H1 (cell line): ENCODE measurements at regions of chr1 and their contacts with region 1.

Region 1: DNA sequence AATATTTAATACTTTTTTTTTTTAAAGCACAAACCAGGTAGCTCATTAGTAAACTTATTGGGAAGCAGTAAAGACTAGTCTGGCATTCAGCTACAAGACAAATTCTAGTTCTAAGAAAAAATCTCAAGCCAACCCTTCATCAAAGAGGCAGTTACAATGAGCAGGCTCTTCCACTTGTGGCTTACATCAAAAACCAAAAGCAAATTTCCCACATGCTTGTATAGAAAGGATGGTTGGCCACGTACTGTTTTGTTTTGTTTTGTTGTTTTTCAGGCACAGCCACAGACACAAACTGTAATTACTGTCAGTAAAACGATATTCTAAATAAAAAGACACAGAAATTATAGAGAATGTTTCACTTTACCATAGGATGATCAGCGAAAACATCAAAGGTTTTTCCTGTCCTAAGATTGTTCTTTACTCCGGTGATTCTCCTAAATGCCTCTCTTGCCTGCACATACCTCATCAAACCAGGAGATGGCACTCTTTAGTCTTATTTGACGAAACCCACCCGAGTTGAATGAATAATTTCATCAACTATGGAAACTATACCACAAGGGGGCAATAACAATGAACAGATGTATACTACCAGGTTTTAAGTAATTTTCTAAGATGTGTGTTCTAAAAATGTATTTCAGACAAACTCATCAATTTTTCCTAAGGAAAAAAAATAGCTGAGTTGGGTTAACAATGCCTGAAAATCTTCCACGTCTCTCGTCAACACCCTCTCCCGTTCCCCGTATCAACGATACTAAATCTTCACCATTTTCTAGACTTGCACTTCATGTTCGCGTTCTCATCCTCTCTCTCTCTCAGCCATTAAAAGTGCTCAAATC is 26.9 kb downstream of the RPL5 start:
- DNase-seq: no peak
- H3K4me3 ChIP-seq: no peak overlapping the region
- H3K27ac ChIP-seq: no peak overlapping the region
- H3K4me1 ChIP-seq: no peaks in the 10 kb centered on the region
- H3K27me3 ChIP-seq: no peaks in the 10 kb centered on the region
- CTCF ChIP-seq: peak in 2 of 3 experiments; percentile 88 to 98; a peak in 3 of 4 replicates
- EP300 ChIP-seq: no peak
- POLR2A ChIP-seq: no peak
- RAD21 ChIP-seq: peak; percentile 95 to 96

Region 2: GRCh38 chr1:92736395-92736794 is 122.4 kb before region 1 on chr1:
- CTCF ChIA-PET with region 1: no interaction called
- POLR2A ChIA-PET with region 1: no interaction called
- DNase-seq: no peak
- H3K4me3 ChIP-seq: no peak overlapping the region
- H3K27ac ChIP-seq: no peak overlapping the region
- H3K4me1 ChIP-seq: no peaks in the 10 kb centered on the region
- H3K27me3 ChIP-seq: no peaks in the 10 kb centered on the region
- CTCF ChIP-seq: peak in 2 of 3 experiments; percentile 32 to 43; a peak in 3 of 4 replicates
- EP300 ChIP-seq: no peak
- POLR2A ChIP-seq: no peak
- RAD21 ChIP-seq: peak; percentile 42 to 47

Region 3: DNA sequence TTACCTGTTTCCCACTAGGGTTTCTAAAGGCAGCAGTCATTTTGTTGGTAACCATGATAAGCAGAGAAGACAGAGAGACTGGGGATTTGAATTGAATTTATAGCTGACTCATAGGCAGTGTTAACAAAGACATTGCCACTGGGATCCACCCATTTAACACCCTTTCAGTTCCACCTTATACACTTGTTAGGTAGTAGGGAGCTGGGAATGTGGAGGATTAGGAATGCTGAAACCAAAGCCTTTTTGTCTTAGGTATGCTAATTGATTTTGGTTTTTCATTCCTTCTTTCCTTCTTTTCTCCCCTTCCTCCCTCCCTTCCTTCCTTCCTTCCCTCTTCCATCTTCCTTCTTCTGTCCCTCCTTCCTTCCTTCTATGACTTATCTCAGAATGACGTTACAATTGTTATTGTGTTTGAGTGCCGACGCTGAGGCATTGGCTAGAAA is 66.4 kb before region 1 on chr1:
- CTCF ChIA-PET with region 1: no interaction called
- POLR2A ChIA-PET with region 1: no interaction called
- DNase-seq: no peak
- H3K4me3 ChIP-seq: peak overlapping the region in 1 of 4 experiments; percentile 40; a peak in 1 of 8 replicates
- H3K27ac ChIP-seq: no peak overlapping the region
- H3K4me1 ChIP-seq: peaks cover 0 to 9% (median 2%) of the 10 kb centered on the region in 4 experiments; a peak in 3 of 7 replicates
- H3K27me3 ChIP-seq: no peaks in the 10 kb centered on the region
- CTCF ChIP-seq: no peak
- EP300 ChIP-seq: no peak
- POLR2A ChIP-seq: no peak
- RAD21 ChIP-seq: no peak

Region 4: DNA sequence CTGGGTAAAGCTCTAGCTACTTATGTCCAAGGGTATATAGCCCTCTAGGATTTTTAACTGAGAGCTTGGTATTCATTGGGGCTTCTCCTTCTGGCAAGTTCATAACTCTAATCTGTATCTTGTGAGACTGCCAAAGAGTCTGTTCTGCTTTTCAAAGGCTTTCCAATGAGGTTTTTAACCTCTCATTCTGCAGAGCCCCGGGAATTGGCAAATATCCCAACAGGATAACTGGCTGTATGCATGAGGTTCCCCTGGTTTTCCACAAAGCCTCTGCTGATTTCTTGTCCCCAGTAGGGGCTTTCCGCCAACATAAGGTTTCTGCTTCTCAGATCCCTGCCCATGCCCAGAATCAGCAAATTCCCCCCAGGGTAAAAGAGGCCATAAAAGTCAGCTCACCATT is 13.9 kb after region 1 on chr1:
- CTCF ChIA-PET with region 1: interaction called, 33 read pairs
- POLR2A ChIA-PET with region 1: interaction called, 4 read pairs
- DNase-seq: no peak
- H3K4me3 ChIP-seq: no peak overlapping the region
- H3K27ac ChIP-seq: no peak overlapping the region
- H3K4me1 ChIP-seq: no peaks in the 10 kb centered on the region; a peak in 1 of 7 replicates
- H3K27me3 ChIP-seq: no peaks in the 10 kb centered on the region
- CTCF ChIP-seq: no peak
- EP300 ChIP-seq: no peak
- POLR2A ChIP-seq: no peak
- RAD21 ChIP-seq: no peak

Region 5: DNA sequence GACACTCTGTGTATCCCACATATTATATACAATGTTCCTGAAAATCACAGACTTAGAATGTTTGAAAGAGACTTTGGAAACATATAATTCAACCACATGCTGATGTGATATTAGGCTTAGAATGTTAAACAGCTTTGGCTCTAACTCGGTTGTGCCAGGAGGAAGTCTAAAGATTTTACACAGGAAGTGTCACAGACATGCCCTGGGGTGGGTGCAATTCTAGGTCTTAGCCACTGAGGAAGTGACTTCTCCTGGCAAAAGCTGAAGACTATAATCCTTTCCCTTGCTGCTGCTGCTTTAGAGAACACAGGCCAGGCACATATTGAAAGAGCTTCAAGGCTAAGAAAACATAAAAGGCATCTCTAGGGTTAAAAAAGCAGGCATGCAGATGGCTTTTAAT is 24.0 kb after region 1 on chr1:
- CTCF ChIA-PET with region 1: interaction called, 21 read pairs
- POLR2A ChIA-PET with region 1: interaction called, 3 read pairs
- DNase-seq: no peak
- H3K4me3 ChIP-seq: no peak overlapping the region
- H3K27ac ChIP-seq: no peak overlapping the region
- H3K4me1 ChIP-seq: no peaks in the 10 kb centered on the region; a peak in 2 of 7 replicates
- H3K27me3 ChIP-seq: no peaks in the 10 kb centered on the region
- CTCF ChIP-seq: no peak
- EP300 ChIP-seq: no peak
- POLR2A ChIP-seq: no peak
- RAD21 ChIP-seq: no peak

Region 6: DNA sequence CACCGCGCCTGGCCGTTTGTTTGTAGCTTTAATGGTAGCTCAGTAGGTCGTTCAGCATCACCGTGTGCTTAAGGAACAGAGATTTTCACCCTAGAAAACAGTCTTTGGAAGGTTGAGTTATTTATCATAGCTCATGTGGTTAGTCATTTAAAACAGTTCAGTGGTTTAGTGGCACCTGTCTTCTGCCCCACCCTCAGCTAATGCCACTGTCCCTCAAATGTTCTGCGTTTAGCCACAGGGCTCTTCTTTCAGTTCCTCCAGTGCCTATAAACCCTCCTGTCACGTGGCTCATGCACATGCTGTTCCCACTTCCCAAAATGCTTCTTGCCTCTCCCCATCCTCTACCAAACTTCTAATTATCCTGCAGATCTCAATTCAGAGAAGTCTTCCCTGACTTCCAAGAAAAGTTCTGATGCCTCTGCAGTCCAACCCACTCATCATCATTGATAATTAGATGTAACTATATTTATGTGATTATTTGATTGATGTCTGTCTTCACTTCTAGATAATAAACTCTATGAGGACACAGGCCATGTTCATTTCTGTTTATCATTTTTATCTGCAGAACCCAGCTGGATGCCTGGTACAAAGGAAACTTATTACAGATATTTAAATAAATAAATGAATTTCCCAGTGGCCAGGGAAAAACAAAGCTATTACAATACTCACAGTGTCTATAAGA is 116.9 kb after region 1 on chr1:
- CTCF ChIA-PET with region 1: interaction called, 11 read pairs
- POLR2A ChIA-PET with region 1: no interaction called
- DNase-seq: no peak
- H3K4me3 ChIP-seq: no peak overlapping the region
- H3K27ac ChIP-seq: no peak overlapping the region
- H3K4me1 ChIP-seq: peaks cover 0 to 6% (median 0%) of the 10 kb centered on the region in 4 experiments; a peak in 1 of 7 replicates
- H3K27me3 ChIP-seq: no peaks in the 10 kb centered on the region; a peak in 1 of 7 replicates
- CTCF ChIP-seq: no peak
- EP300 ChIP-seq: no peak
- POLR2A ChIP-seq: no peak
- RAD21 ChIP-seq: no peak

Region 7: DNA sequence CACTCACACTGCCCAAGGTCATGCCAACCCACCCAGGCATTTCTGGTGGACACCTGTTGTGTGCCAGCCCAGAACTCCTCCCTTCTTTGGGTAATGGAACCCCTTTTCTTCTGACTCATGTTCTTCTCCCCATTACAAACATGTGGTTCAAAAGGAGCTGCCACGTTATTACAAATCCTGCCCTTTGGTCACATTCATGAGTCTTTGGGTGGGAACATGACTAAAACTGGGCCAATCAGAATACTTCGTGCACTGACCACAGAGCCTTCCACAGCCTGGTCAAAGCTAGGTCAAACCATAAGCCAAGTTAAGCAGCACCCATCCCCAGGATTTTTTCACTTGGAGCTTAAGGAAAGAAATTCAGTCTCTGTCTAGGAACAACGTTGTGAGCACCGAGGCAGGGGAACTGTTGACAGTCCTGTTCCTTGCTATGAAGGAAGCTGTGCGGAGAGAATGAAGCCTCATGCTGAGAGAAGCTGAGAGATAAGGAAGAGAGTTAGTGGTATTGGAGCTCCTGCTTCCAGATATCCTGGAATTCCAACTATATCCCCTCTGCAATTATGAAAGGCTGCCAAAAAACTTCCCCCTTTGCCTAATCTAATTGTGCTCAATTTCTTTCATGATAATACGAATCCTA is 149.3 kb after region 1 on chr1:
- CTCF ChIA-PET with region 1: interaction called, 10 read pairs
- POLR2A ChIA-PET with region 1: no interaction called
- DNase-seq: peak in 1 of 2 experiments; percentile 26
- H3K4me3 ChIP-seq: no peak overlapping the region
- H3K27ac ChIP-seq: no peak overlapping the region
- H3K4me1 ChIP-seq: no peaks in the 10 kb centered on the region
- H3K27me3 ChIP-seq: no peaks in the 10 kb centered on the region
- CTCF ChIP-seq: no peak
- EP300 ChIP-seq: no peak
- POLR2A ChIP-seq: no peak
- RAD21 ChIP-seq: no peak

Region 8: DNA sequence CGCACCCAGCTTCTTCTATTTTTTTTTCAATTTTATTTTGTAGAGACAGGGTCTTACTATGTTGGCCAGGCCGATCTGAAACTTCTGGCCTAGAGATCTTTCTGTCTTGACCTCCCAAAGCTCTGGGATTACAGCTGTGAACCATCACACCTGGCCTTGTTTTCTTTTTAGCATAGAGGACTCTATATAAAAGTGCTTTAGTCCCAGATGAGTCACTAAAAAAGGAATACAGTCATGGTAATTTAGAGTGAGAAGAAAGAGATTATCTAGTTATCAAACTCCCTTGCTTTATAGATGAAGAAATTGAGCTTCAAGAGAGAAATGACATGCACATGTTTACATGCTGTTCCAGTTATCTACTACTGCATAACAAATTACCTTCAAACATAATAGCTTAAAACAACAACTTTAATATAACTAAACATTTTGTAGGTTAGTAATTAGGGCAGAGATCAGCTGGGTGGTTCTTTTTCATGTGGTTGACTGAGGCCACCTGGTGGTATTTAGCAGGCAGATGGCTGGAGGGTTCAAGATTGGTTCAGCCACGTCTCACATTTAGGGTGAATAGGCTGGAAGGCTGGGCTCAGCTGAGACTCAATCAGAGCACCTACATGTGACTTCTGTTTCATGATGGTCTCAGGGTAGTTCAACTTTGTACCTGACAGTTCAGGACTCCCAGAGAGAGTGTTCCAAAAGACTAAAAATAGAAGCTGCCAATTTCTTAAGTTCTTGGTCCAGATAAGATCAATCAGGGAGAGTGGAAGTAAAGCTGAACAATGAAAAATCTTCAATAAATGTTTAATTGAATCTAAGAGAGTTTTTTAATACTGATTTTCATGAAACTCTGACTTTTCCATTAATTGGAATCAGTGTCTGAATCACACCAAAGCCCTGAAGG is 203.4 kb after region 1 on chr1:
- CTCF ChIA-PET with region 1: interaction called, 24 read pairs
- POLR2A ChIA-PET with region 1: no interaction called
- DNase-seq: peak in 1 of 2 experiments; percentile 49
- H3K4me3 ChIP-seq: no peak overlapping the region
- H3K27ac ChIP-seq: no peak overlapping the region
- H3K4me1 ChIP-seq: no peaks in the 10 kb centered on the region
- H3K27me3 ChIP-seq: no peaks in the 10 kb centered on the region
- CTCF ChIP-seq: peak; percentile 58 to 78 (median 75)
- EP300 ChIP-seq: no peak
- POLR2A ChIP-seq: no peak
- RAD21 ChIP-seq: peak; percentile 86 to 89